GM10248 (cell line): ENCODE measurements at regions of chr15 and their contacts with region 1.

Region 1: DNA sequence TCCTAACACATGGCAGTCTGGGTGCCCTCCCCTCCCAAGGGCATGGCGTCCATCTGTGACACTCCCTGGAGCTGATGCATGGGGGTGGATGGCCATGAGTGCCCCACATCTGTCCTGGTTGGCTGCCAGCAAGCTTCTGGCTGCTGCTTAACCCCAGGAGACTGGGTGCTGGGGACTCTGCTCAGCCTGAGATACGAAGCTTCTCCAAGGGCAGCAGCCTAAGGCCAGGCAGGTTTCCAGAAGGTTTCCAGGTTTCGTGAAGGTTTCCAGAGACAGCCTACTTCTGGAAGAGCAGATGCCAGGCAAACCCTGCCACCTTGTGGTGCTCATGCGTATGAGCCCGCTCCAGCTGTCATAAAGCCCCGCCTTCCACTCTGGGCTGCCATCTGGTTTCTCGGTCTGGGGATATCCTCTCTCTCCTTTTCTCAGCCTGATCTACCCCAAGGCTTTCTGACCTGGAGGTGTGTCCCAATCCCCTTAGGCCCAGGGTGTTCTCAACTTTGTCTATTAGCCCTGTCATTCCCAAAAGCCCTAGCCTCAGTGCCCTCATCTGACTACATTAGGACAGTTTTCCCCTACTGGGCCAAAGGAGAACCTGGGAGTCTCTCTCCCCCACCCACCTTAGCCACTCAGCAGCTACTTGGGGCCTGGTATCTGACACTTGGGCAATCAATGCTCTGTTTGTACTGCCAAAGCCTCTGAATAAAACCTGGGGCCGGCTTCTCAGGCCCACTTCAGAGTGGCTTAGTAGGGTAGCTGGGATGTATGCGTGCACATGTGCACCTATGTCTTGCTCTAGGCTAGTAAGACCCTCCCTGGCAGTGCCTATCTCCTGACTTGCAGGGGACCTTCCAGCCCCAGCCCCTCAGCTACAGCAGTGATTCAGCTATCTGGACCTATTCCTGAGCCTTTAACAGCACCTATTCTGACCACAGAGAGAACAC is 12.0 kb downstream of the MRPL46 start:
- DNase-seq: peak; percentile 61
- CTCF ChIP-seq: peak; percentile 43

Region 2: GRCh38 chr15:87981969-87982368 is 473.2 kb before region 1 on chr15:
- CTCF ChIA-PET with region 1: no interaction called
- POLR2A ChIA-PET with region 1: no interaction called
- DNase-seq: no peak
- CTCF ChIP-seq: no peak

Region 3: DNA sequence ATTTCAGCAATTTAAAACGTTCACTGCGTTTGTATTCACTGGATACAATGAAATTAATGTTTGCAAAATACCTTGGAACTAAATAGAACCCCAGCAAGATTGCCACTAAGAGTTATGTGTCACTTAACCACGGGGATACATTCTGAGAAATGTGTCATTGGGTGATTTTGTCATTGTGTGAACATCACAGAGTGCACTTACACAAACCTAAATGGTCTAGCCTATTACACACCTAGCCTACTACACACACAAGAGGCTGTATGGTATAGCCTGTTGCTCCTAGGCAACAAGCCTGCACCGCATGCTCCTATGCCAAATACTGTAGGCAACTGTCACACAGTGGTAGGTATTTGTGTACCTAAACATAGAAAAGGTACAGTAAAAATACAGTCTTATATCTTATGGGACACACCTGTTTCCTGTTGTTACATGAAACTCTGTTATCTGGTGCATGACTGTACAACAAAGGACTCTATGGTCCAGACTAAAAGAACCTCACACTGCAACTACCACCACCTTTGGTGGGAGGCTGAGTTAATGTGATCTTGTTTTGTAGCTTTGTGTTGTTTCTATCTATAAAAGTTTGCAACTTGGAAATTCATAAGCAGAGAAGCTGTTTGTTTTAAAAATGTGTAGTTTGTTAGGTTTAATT is 106.4 kb before region 1 on chr15:
- CTCF ChIA-PET with region 1: no interaction called
- POLR2A ChIA-PET with region 1: no interaction called
- DNase-seq: no peak
- CTCF ChIP-seq: no peak

Region 4: GRCh38 chr15:88440021-88440420 is 15.1 kb before region 1 on chr15:
- CTCF ChIA-PET with region 1: interaction called, 21 read pairs
- POLR2A ChIA-PET with region 1: no interaction called
- DNase-seq: no peak
- CTCF ChIP-seq: no peak

Region 5: DNA sequence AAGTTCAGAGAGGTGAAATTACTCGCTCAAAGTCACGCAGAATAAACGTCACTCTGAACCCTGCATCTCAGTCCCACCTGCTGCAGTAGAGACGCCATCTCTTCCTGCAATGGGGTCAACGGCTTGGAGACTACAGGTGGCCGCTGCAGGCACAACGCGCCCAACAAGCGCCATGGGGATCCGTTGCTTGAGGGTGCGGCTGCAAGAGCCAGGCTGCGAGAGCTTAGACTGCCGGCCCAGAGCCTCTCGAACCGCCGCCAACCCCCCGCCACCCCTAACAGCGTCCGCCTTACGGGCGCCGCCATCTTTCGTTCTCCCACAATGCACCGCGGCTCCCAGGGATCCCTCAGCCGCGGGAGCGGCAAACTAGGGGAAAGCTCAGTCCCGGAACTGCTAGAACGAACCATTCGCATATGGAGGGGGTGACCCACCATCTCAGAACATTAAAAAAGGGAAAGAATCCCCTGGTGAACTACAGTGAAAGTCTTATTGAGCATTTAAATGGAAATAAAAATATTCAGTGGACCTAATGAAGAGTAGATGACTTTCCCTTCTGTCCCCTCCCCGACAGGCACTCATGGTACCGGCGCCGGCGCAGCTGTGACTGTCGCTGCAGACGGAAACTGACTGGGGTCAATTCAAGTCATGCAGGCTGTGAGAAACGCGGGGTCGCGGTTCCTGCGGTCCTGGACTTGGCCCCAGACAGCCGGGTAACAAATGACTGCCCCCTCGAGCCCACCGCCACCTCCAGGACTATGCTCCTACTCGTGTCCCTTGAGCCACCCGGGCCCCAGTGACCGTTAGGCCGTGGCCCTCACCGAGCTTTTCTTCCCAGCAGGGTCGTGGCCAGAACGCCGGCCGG is 12.2 kb after region 1 on chr15 and contains the starts of genes MRPL46 and MRPS11:
- CTCF ChIA-PET with region 1: interaction called, 95 read pairs
- POLR2A ChIA-PET with region 1: no interaction called
- DNase-seq: peak; percentile 90
- CTCF ChIP-seq: no peak